ENCODE measurements at regions of chr1 and their contacts with region 1.

Region 1: DNA sequence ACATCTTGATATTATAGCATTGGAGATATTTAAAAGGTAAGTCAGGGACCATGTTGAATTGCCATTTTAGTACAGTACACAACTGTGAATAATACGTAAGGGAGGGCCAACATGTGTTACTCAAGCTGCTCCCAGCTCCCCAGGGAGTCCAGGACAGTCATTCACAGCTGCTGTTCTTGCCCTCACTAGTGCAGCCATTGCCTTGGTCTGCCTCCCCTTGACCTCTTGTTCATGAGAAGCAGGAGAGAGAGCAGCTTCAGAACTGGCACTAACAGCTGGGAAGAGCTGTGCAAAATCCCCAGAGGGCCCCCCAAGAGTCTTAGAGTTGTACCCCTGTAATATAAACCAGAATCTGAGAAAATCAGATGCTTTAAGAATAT is 16.4 kb downstream of the TCEANC2 start:
- DNase-seq: peak in 1 of 4 donors; percentile 1
- ATAC-seq: peak; percentile 17
- H3K4me3 ChIP-seq: no peak overlapping the region
- H3K27ac ChIP-seq: no peak overlapping the region
- H3K4me1 ChIP-seq: peaks cover 0 to 9% of the 10 kb centered on the region in 2 donors
- H3K27me3 ChIP-seq: no peaks in the 10 kb centered on the region
- CTCF ChIP-seq: no peak

Region 2: GRCh38 chr1:54488779-54489626 is 419.2 kb after region 1 on chr1:
- intact Hi-C with region 1: loop called in 1 of 2 experiments (anchors 5 kb)
- DNase-seq: peak; percentile 78 to 95 (median 92)
- ATAC-seq: peak; percentile 86
- H3K4me3 ChIP-seq: peak overlapping the region; percentile 56 to 59
- H3K27ac ChIP-seq: peak overlapping the region; percentile 91
- H3K4me1 ChIP-seq: peaks cover 22 to 40% of the 10 kb centered on the region in 2 donors
- H3K27me3 ChIP-seq: peaks cover 0 to 30% of the 10 kb centered on the region in 2 donors
- CTCF ChIP-seq: peak; percentile 96 to 98

Measured in left lung (tissue), 14 donors.